ENCODE measurements at regions of chr1 and their contacts with region 1.

Region 1: GRCh38 chr1:100912019-100912418 is 16.1 kb downstream of the SLC30A7 start:
- DNase-seq: no peak
- ATAC-seq: no peak
- H3K4me3 ChIP-seq: no peak overlapping the region
- H3K27ac ChIP-seq: no peak overlapping the region
- H3K4me1 ChIP-seq: no peaks in the 10 kb centered on the region
- H3K27me3 ChIP-seq: no peaks in the 10 kb centered on the region
- CTCF ChIP-seq: no peak

Region 2: GRCh38 chr1:101198842-101199636 is 287.0 kb after region 1 on chr1:
- intact Hi-C with region 1: no loop called
- DNase-seq: no peak
- ATAC-seq: peak in 2 of 8 donors; percentile 27 to 54
- H3K4me3 ChIP-seq: no peak overlapping the region
- H3K27ac ChIP-seq: no peak overlapping the region
- H3K4me1 ChIP-seq: peaks cover 0 to 14% (median 7%) of the 10 kb centered on the region in 9 donors
- H3K27me3 ChIP-seq: no peaks in the 10 kb centered on the region
- CTCF ChIP-seq: no peak

Region 3: DNA sequence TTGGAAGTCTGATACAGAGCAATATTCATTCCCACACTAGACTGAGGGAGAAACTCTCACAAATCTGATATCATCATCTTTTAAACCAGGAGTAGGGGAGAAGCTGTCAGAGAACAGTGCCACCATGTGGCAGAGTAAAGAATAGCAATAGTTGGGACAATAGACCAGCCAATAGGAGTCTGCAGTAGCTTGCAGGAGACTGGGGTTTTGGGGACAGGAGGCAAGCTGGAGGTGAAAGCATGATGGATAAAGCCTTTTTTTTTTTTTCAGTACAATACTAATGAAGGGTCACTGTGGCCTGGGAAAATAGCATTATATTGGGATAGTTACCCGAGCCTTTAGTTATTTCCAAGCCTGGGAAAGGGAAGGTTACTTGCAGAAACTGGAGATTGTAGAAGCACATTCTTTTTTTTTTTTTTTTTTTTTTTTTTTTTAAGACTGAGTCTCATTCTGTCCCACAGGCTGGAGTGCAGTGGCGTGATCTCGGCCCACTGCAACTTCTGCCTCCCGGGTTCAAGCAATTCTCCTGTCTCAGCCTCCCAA is 445.5 kb after region 1 on chr1:
- intact Hi-C with region 1: loop called in 2 of 10 experiments (anchors 5 to 10 kb)
- DNase-seq: peak in 1 of 2 donors; percentile 77
- ATAC-seq: peak; percentile 78 to 90 (median 82)
- H3K4me3 ChIP-seq: no peak overlapping the region
- H3K27ac ChIP-seq: no peak overlapping the region
- H3K4me1 ChIP-seq: no peaks in the 10 kb centered on the region
- H3K27me3 ChIP-seq: peaks cover 0 to 26% (median 0%) of the 10 kb centered on the region in 7 donors
- CTCF ChIP-seq: peak; percentile 76 to 91 (median 85)

Measured in heart right ventricle (tissue), 16 donors.